Adrenal gland (tissue), 19 donors: ENCODE measurements at regions of chrX and their contacts with region 1.

Region 1: GRCh38 chrX:136953867-136954787 is 73.6 kb upstream of the RBMX start:
- DNase-seq: peak; percentile 41 to 88 (median 72)
- H3K4me3 ChIP-seq: no peak overlapping the region
- H3K27ac ChIP-seq: no peak overlapping the region
- H3K4me1 ChIP-seq: no peaks in the 10 kb centered on the region
- H3K27me3 ChIP-seq: no peaks in the 10 kb centered on the region
- CTCF ChIP-seq: peak in 5 of 6 experiments; percentile 38 to 60 (median 46)
- POLR2A ChIP-seq: no peak

Region 2: DNA sequence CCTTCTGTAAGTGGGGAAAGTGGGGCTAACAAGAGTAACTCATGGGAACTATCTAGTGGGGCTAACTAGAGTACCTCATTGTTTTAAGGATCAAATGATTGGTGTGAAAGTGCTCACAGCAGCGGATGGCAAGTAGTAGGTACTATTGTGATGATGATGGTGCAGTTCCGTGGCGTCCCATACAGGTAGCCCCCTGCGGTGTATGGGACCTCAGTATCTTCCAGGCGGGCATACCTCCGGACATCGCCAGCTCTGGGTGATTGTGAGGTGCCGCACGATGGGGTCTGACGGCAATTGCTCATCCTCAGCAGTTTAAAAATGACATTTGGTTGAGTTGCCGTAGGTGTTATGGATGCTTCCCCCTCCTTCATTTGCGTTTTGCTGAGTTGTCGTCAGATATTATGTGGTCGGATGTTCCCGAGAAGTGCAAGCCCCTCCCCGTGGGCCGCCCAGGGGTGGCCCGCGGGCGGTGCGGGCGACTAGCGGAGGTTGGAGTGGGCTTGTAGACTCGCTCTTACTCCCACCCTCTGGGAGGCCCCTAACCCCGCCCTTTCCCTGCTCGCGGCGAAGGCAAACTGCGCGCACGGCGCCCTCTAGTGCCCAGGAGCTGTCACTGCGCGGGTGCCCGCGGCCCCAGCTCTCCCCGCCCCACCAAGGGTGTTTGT is 98.0 kb after region 1 on chrX:
- intact Hi-C with region 1: loop called in 1 of 2 experiments (anchors 5 kb)
- DNase-seq: peak; percentile 34 to 62 (median 52)
- H3K4me3 ChIP-seq: peak overlapping the region in 1 of 4 donors; percentile 55
- H3K27ac ChIP-seq: no peak overlapping the region
- H3K4me1 ChIP-seq: no peaks in the 10 kb centered on the region
- H3K27me3 ChIP-seq: peaks cover 43% of the 10 kb centered on the region
- CTCF ChIP-seq: peak; percentile 38 to 71 (median 58)
- POLR2A ChIP-seq: no peak

Region 3: GRCh38 chrX:137194164-137194563 is 240.0 kb after region 1 on chrX:
- intact Hi-C with region 1: loop called (anchors 5 to 10 kb)
- DNase-seq: peak in 6 of 7 donors; percentile 15 to 50 (median 18)
- H3K4me3 ChIP-seq: no peak overlapping the region
- H3K27ac ChIP-seq: no peak overlapping the region
- H3K4me1 ChIP-seq: no peaks in the 10 kb centered on the region
- H3K27me3 ChIP-seq: peaks cover 27% of the 10 kb centered on the region
- CTCF ChIP-seq: peak; percentile 31 to 53 (median 38)
- POLR2A ChIP-seq: no peak